Activated naive CD4-positive, alpha-beta T cell treated with anti-CD3 and anti-CD28 coated beads for 36 hours (primary cell): ENCODE measurements at regions of chr3 and their contacts with region 1.

Region 1: GRCh38 chr3:197736491-197737318 is at the start of gene RUBCN:
- DNase-seq: peak; percentile 96
- H3K4me3 Mint-ChIP-seq: peak within 1 kb of the TSS; percentile 92
- H3K27ac Mint-ChIP-seq: peak within 1 kb of the TSS; percentile 92
- H3K4me1 Mint-ChIP-seq: peaks cover 35% of the 10 kb centered on the region
- H3K27me3 Mint-ChIP-seq: no peaks in the 10 kb centered on the region
- total RNA-seq, gene RUBCN: 20.8 to 22.0 TPM

Region 2: GRCh38 chr3:197749601-197750395 is 13.1 kb after region 1 on chr3 and contains the start of gene FYTTD1:
- CTCF ChIA-PET with region 1: no interaction called
- intact Hi-C with region 1: loop called (anchors 1 kb)
- DNase-seq: peak; percentile 81
- H3K4me3 Mint-ChIP-seq: peak within 1 kb of the TSS; percentile 93
- H3K27ac Mint-ChIP-seq: peak within 1 kb of the TSS; percentile 83
- H3K4me1 Mint-ChIP-seq: peaks cover 30% of the 10 kb centered on the region
- H3K27me3 Mint-ChIP-seq: no peaks in the 10 kb centered on the region
- total RNA-seq, gene FYTTD1: 25.1 to 27.6 TPM

Region 3: DNA sequence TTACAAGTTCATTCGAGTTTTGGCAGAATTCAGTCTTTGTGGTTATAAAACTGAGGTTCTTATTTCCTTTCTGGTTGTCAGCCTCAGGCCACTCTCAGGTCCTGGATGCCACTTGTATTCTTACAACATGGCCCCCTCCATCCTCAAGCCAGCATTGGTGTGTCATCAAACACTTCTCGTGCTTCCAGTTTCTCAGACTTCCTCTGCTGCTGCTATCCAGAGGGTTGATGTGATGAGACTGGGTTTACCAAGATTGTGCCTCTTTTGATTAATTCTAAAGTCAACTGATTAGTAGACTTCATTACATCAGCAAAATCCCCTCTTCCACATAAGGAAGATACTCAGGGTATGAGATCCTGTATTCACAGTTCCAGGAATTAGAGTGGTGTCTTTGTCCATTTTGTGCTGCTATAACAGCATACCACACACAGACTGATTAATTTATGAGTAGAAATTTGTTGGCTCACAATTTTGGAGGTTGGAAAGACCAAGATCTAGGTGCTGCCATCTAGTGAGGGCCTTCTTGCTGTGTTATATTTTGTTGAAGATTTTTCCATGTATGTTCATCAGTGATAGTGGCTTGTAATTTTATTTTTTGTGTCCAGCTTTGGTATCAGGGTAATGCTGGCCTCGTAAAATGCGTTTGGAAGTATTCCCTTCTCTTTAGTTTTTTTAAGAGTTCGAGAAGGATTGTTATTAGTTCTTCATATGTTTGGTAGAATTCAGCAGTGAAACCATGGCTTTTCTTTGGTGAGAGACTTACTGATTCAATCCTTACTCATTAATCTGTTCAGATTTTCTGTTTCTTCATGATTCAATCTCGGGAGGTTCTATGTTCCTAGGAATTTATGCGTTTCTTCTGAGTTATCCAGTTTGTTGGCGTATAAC is 65.4 kb after region 1 on chr3:
- CTCF ChIA-PET with region 1: no interaction called
- intact Hi-C with region 1: loop called (anchors 1 kb)
- DNase-seq: peak; percentile 59
- H3K4me3 Mint-ChIP-seq: no peak overlapping the region
- H3K27ac Mint-ChIP-seq: peak overlapping the region; percentile 46
- H3K4me1 Mint-ChIP-seq: peaks cover 53% of the 10 kb centered on the region
- H3K27me3 Mint-ChIP-seq: no peaks in the 10 kb centered on the region

Region 4: GRCh38 chr3:197959898-197960693 is 223.4 kb after region 1 on chr3 and contains the start of gene LMLN:
- CTCF ChIA-PET with region 1: no interaction called
- intact Hi-C with region 1: loop called (anchors 5 kb)
- DNase-seq: peak; percentile 95
- H3K4me3 Mint-ChIP-seq: peak within 1 kb of the TSS; percentile 85
- H3K27ac Mint-ChIP-seq: peak within 1 kb of the TSS; percentile 88
- H3K4me1 Mint-ChIP-seq: peaks cover 43% of the 10 kb centered on the region
- H3K27me3 Mint-ChIP-seq: no peaks in the 10 kb centered on the region
- total RNA-seq, gene LMLN: 2.1 to 2.2 TPM